CD8-positive, alpha-beta T cell (primary cell): ENCODE measurements at regions of chr16 and their contacts with region 1.

Region 1: GRCh38 chr16:17013038-17013437 is 457.7 kb downstream of the XYLT1 start:
- DNase-seq: no peak
- ATAC-seq: no peak
- H3K4me3 ChIP-seq: peak overlapping the region in 1 of 2 experiments; percentile 44
- H3K4me3 Mint-ChIP-seq: peak overlapping the region; percentile 77
- H3K27ac ChIP-seq: peak overlapping the region; percentile 69 to 78
- H3K27ac Mint-ChIP-seq: peak overlapping the region; percentile 99
- H3K4me1 ChIP-seq: peaks cover 13% of the 10 kb centered on the region
- H3K4me1 Mint-ChIP-seq: peaks cover 30% of the 10 kb centered on the region
- H3K27me3 ChIP-seq: no peaks in the 10 kb centered on the region
- H3K27me3 Mint-ChIP-seq: peaks cover 6% of the 10 kb centered on the region
- CTCF ChIP-seq: no peak

Region 2: DNA sequence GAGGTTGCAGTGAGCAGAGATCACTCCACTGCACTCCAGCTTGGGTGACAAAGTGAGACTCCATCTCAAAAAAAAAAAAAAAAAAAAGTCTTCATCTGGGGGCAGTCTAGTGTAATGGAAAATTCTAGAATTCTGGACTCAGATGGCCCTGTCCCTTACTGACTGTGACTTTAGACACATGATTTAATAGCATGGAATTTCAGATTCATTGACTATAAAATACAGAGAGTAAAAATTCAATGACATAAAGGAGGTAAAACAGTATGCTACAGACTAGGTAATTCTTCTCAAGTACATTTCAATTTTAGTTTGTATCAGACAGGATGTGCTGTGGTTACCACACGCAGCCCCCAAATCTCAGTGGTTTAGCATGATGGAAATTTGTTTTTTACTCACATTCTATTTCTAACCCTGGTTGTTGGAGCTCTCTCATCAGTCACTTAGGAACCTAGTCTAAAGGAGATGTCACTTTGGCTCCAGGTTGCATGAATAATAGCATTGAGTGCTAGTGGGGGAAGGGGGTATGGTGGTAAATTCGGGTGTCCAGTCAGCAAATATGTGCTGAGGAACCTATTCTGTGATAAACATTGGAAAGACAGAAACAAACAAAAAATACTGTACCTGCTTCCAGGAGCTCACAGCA is 13.7 kb after region 1 on chr16:
- CTCF ChIA-PET with region 1: no interaction called
- POLR2A ChIA-PET with region 1: no interaction called
- intact Hi-C with region 1: loop called in 1 of 2 experiments (anchors 2 kb)
- DNase-seq: peak in 6 of 9 experiments; percentile 30 to 74 (median 58)
- ATAC-seq: peak; percentile 84
- H3K4me3 ChIP-seq: no peak overlapping the region
- H3K4me3 Mint-ChIP-seq: peak overlapping the region; percentile 37
- H3K27ac ChIP-seq: no peak overlapping the region
- H3K27ac Mint-ChIP-seq: peak overlapping the region; percentile 85
- H3K4me1 ChIP-seq: peaks cover 32% of the 10 kb centered on the region
- H3K4me1 Mint-ChIP-seq: peaks cover 44% of the 10 kb centered on the region
- H3K27me3 ChIP-seq: no peaks in the 10 kb centered on the region
- H3K27me3 Mint-ChIP-seq: no peaks in the 10 kb centered on the region
- CTCF ChIP-seq: no peak

Region 3: DNA sequence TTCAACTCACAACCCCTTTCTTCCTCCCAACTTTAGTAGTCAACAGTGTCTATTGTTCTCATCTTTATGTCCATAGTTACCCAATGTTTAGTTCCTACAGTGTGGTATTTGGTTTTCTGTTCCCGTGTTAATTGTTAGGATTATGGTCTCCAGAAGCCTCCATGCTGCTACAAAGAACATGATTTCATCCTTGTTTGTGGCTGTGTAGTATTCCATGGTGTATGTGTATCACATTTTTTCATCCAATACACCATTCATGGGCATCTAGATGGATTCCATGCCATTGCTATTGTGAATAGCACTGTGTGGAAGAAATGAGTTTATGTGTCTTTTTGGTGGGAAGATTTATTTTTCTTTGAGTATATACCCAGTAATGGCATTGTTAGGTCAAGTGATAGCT is 37.4 kb after region 1 on chr16:
- CTCF ChIA-PET with region 1: no interaction called
- POLR2A ChIA-PET with region 1: no interaction called
- intact Hi-C with region 1: no loop called
- DNase-seq: no peak
- ATAC-seq: no peak
- H3K4me3 ChIP-seq: no peak overlapping the region
- H3K4me3 Mint-ChIP-seq: no peak overlapping the region
- H3K27ac ChIP-seq: no peak overlapping the region
- H3K27ac Mint-ChIP-seq: no peak overlapping the region
- H3K4me1 ChIP-seq: no peaks in the 10 kb centered on the region
- H3K4me1 Mint-ChIP-seq: peaks cover 4% of the 10 kb centered on the region
- H3K27me3 ChIP-seq: no peaks in the 10 kb centered on the region
- H3K27me3 Mint-ChIP-seq: no peaks in the 10 kb centered on the region
- CTCF ChIP-seq: no peak

Region 4: GRCh38 chr16:17070882-17071592 is 58.0 kb after region 1 on chr16:
- CTCF ChIA-PET with region 1: no interaction called
- POLR2A ChIA-PET with region 1: no interaction called
- intact Hi-C with region 1: loop called in 1 of 2 experiments (anchors 1 kb)
- DNase-seq: peak; percentile 51 to 94 (median 74)
- ATAC-seq: peak; percentile 85
- H3K4me3 ChIP-seq: peak overlapping the region; percentile 32 to 51
- H3K4me3 Mint-ChIP-seq: peak overlapping the region; percentile 87
- H3K27ac ChIP-seq: peak overlapping the region; percentile 67 to 68
- H3K27ac Mint-ChIP-seq: peak overlapping the region; percentile 97
- H3K4me1 ChIP-seq: peaks cover 4% of the 10 kb centered on the region
- H3K4me1 Mint-ChIP-seq: peaks cover 17% of the 10 kb centered on the region
- H3K27me3 ChIP-seq: no peaks in the 10 kb centered on the region
- H3K27me3 Mint-ChIP-seq: no peaks in the 10 kb centered on the region
- CTCF ChIP-seq: no peak

Region 5: DNA sequence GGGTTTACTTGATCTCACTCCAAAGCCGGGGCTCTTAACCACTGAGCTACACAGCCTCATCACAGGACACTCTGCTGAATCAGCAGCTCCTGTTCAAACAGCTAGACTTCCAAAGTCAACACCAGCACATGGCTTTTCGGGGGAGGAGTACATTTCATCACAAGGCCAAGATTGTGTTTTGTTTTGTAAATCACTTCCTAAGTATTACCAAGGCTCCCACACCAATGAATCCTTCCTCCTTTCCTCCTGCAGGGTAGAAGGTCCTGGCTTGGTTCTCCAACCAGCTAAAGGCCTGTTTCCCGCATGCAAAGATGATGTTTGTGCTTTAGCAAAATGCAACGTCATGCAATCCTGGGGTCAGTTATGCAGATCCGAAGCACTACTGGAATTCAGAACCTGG is 305.2 kb after region 1 on chr16:
- CTCF ChIA-PET with region 1: no interaction called
- POLR2A ChIA-PET with region 1: no interaction called
- intact Hi-C with region 1: no loop called
- DNase-seq: no peak
- ATAC-seq: no peak
- H3K4me3 ChIP-seq: no peak overlapping the region
- H3K4me3 Mint-ChIP-seq: no peak overlapping the region
- H3K27ac ChIP-seq: no peak overlapping the region
- H3K27ac Mint-ChIP-seq: no peak overlapping the region
- H3K4me1 ChIP-seq: peaks cover 5% of the 10 kb centered on the region
- H3K4me1 Mint-ChIP-seq: peaks cover 25% of the 10 kb centered on the region
- H3K27me3 ChIP-seq: no peaks in the 10 kb centered on the region
- H3K27me3 Mint-ChIP-seq: no peaks in the 10 kb centered on the region
- CTCF ChIP-seq: no peak